ENCODE measurements at regions of chr7 and their contacts with region 1.

Region 1: DNA sequence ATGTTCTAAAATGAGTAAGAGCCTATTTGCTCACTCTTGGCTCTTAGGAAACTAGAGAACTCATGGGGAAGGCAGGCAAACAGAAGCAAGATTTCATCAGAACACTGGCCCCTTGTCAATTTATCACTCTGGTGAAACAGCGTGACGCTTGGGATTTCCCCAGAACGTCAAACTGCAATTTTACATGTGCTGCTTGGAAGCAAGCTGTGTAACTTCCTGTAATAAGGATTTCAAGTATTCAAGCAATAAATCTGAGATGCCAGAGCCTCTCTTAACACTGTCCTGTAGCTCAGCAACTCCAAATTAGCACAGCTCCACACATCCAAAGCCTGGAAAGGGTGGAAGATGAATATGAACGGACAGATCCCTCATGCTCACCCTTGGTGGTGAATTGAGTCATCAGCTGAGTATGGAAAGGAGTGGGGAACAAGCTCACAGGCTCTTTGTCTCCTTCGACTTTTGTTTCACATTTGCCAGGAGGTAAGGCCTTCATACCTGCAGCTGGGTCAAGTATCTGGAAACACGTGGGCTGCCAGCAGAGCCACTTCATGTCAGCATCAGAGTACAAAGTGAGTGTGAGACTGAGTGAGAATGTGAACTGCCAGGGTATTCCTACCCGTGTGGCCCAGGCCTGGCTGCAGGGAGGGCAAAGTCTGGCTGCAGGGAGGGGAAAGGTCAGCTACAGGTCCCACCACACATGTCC is 140.4 kb upstream of the NAMPT start:
- DNase-seq: peak; percentile 36
- ATAC-seq: peak; percentile 90
- H3K4me3 Mint-ChIP-seq: peak overlapping the region; percentile 72
- H3K27ac Mint-ChIP-seq: peak overlapping the region; percentile 94
- H3K4me1 Mint-ChIP-seq: peaks cover 34% of the 10 kb centered on the region
- H3K27me3 Mint-ChIP-seq: no peaks in the 10 kb centered on the region
- CTCF ChIP-seq: no peak

Region 2: GRCh38 chr7:105376908-105377533 is 1048.1 kb before region 1 on chr7:
- CTCF ChIA-PET with region 1: no interaction called
- POLR2A ChIA-PET with region 1: no interaction called
- intact Hi-C with region 1: no loop called
- DNase-seq: no peak
- ATAC-seq: no peak
- H3K4me3 Mint-ChIP-seq: no peak overlapping the region
- H3K27ac Mint-ChIP-seq: no peak overlapping the region
- H3K4me1 Mint-ChIP-seq: peaks cover 51% of the 10 kb centered on the region
- H3K27me3 Mint-ChIP-seq: no peaks in the 10 kb centered on the region
- CTCF ChIP-seq: no peak

Region 3: GRCh38 chr7:105808703-105809590 is 616.2 kb before region 1 on chr7:
- CTCF ChIA-PET with region 1: no interaction called
- POLR2A ChIA-PET with region 1: no interaction called
- intact Hi-C with region 1: loop called (anchors 1 kb)
- DNase-seq: peak; percentile 60
- ATAC-seq: peak; percentile 95
- H3K4me3 Mint-ChIP-seq: peak overlapping the region; percentile 66
- H3K27ac Mint-ChIP-seq: peak overlapping the region; percentile 87
- H3K4me1 Mint-ChIP-seq: peaks cover 46% of the 10 kb centered on the region
- H3K27me3 Mint-ChIP-seq: no peaks in the 10 kb centered on the region
- CTCF ChIP-seq: no peak

Region 4: GRCh38 chr7:106071356-106071998 is 353.7 kb before region 1 on chr7:
- CTCF ChIA-PET with region 1: no interaction called
- POLR2A ChIA-PET with region 1: no interaction called
- intact Hi-C with region 1: loop called (anchors 2 kb)
- DNase-seq: peak; percentile 57
- ATAC-seq: peak; percentile 87
- H3K4me3 Mint-ChIP-seq: peak overlapping the region; percentile 73
- H3K27ac Mint-ChIP-seq: peak overlapping the region; percentile 98
- H3K4me1 Mint-ChIP-seq: peaks cover 100% of the 10 kb centered on the region
- H3K27me3 Mint-ChIP-seq: no peaks in the 10 kb centered on the region
- CTCF ChIP-seq: no peak

Region 5: GRCh38 chr7:106346678-106347217 is 78.4 kb before region 1 on chr7:
- CTCF ChIA-PET with region 1: no interaction called
- POLR2A ChIA-PET with region 1: interaction called, 12 read pairs
- intact Hi-C with region 1: loop called (anchors 1 kb)
- DNase-seq: no peak
- ATAC-seq: peak; percentile 82
- H3K4me3 Mint-ChIP-seq: no peak overlapping the region
- H3K27ac Mint-ChIP-seq: peak overlapping the region; percentile 74
- H3K4me1 Mint-ChIP-seq: peaks cover 27% of the 10 kb centered on the region
- H3K27me3 Mint-ChIP-seq: peaks cover 6% of the 10 kb centered on the region
- CTCF ChIP-seq: no peak

Region 6: DNA sequence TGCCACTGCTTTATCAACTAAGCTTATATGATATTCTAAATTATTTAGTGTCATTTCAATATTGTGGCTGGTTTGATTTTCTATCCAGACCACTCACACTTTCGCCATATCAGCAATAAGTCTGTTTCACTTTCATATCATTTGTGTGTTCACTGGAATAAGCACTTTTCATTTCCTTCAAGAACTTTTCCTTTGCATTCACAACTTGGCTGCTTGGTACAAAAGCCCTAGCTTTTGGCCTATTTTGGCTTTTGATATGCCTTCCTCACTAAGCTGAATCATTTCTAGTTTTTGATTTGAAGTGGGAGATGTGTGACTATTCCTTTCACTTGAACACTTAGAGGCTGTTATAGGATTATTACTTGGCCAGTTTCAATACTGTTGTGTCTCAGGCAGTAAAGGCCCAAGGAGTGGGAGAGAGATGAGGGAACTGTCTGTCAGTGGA is 19.4 kb before region 1 on chr7:
- CTCF ChIA-PET with region 1: no interaction called
- POLR2A ChIA-PET with region 1: no interaction called
- intact Hi-C with region 1: no loop called
- DNase-seq: no peak
- ATAC-seq: no peak
- H3K4me3 Mint-ChIP-seq: no peak overlapping the region
- H3K27ac Mint-ChIP-seq: no peak overlapping the region
- H3K4me1 Mint-ChIP-seq: no peaks in the 10 kb centered on the region
- H3K27me3 Mint-ChIP-seq: peaks cover 11% of the 10 kb centered on the region
- CTCF ChIP-seq: no peak

Region 7: DNA sequence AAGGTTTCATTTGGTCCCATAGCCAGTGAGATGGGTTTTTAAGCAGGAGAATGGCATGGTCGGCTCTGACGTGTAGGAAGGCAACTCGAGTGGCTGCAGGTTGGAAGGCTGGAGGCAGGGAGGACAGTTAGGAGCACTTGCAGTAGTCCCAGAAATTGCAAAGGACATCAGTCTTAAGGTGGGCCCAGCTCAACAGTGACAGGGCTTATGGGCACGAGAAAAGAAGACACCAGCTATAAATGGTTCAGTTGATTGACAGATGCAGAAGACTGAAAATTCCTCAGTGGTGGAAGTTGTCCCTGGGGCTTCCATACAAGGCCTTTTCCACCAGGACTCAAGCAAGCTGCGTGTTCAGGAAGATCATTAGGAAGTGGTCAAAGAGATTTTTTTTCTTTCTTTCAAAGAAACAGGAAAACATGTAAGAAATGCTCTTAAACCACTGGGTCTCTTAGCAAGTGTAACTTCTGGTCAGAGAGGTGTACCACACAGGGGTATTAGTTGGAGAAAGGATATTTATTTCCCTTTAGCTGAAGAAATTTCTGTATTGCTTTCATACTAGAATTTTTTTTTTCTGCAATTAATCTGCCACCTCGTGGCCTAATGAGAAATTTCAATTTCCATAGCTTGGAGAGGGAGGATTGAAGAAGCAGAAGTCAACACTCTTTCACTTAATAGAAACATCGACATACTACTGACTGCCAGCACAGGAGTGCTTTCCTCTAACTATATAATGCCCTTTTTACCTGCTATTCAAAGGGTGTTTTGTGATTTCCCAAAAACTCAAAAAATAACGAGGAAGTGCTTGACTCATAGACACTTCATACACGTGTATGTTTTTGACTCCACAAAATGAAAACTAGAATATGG is 37.1 kb after region 1 on chr7:
- CTCF ChIA-PET with region 1: interaction called, 6 read pairs
- POLR2A ChIA-PET with region 1: interaction called, 11 read pairs
- intact Hi-C with region 1: loop called (anchors 1 kb)
- DNase-seq: no peak
- ATAC-seq: peak; percentile 62
- H3K4me3 Mint-ChIP-seq: no peak overlapping the region
- H3K27ac Mint-ChIP-seq: no peak overlapping the region
- H3K4me1 Mint-ChIP-seq: peaks cover 14% of the 10 kb centered on the region
- H3K27me3 Mint-ChIP-seq: no peaks in the 10 kb centered on the region
- CTCF ChIP-seq: no peak

Region 8: GRCh38 chr7:106501605-106502580 is 76.7 kb after region 1 on chr7:
- CTCF ChIA-PET with region 1: no interaction called
- POLR2A ChIA-PET with region 1: interaction called, 14 read pairs
- intact Hi-C with region 1: no loop called
- DNase-seq: no peak
- ATAC-seq: no peak
- H3K4me3 Mint-ChIP-seq: no peak overlapping the region
- H3K27ac Mint-ChIP-seq: no peak overlapping the region
- H3K4me1 Mint-ChIP-seq: no peaks in the 10 kb centered on the region
- H3K27me3 Mint-ChIP-seq: no peaks in the 10 kb centered on the region
- CTCF ChIP-seq: no peak

Region 9: DNA sequence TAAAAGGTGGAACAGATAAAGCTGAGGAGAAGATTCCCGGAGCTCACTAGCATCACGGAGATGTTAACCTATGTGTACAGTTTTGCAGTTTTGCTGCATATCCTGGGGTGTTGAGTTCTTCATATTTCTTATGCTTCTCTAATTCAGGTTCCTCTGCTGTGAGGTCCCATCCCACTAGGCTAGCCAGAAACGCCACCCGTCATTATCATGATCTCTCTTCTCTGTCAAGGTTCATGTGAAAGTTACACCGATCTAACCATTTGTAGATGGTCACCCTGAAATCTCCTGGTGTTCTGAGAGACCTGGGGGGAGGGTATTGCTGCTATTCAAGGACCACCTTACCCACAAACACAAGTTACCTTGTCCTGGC is 99.5 kb after region 1 on chr7:
- CTCF ChIA-PET with region 1: no interaction called
- POLR2A ChIA-PET with region 1: no interaction called
- intact Hi-C with region 1: no loop called
- DNase-seq: no peak
- ATAC-seq: no peak
- H3K4me3 Mint-ChIP-seq: no peak overlapping the region
- H3K27ac Mint-ChIP-seq: no peak overlapping the region
- H3K4me1 Mint-ChIP-seq: no peaks in the 10 kb centered on the region
- H3K27me3 Mint-ChIP-seq: peaks cover 5% of the 10 kb centered on the region
- CTCF ChIP-seq: no peak

Region 10: GRCh38 chr7:106717955-106718871 is 293.0 kb after region 1 on chr7:
- CTCF ChIA-PET with region 1: no interaction called
- POLR2A ChIA-PET with region 1: no interaction called
- intact Hi-C with region 1: loop called (anchors 2 kb)
- DNase-seq: no peak
- ATAC-seq: peak; percentile 88
- H3K4me3 Mint-ChIP-seq: no peak overlapping the region
- H3K27ac Mint-ChIP-seq: no peak overlapping the region
- H3K4me1 Mint-ChIP-seq: peaks cover 12% of the 10 kb centered on the region
- H3K27me3 Mint-ChIP-seq: no peaks in the 10 kb centered on the region
- CTCF ChIP-seq: no peak

Measured in activated B cell treated with CpG ODN at 0.5 μM for 24 hours (primary cell).